ENCODE measurements at regions of chr19 and their contacts with region 1.

Region 1: GRCh38 chr19:43784981-43785808 is 4.4 kb upstream of the KCNN4 start:
- DNase-seq: peak in 2 of 10 donors; percentile 40 to 46
- H3K4me3 ChIP-seq: peak overlapping the region in 4 of 59 donors; percentile 7 to 32 (median 16)
- H3K27ac ChIP-seq: peak overlapping the region in 3 of 59 donors; percentile 21 to 40 (median 38)
- H3K27me3 ChIP-seq: peaks cover 0 to 6% (median 0%) of the 10 kb centered on the region in 45 donors
- CTCF ChIP-seq: peak; percentile 76 to 97 (median 90)

Region 2: DNA sequence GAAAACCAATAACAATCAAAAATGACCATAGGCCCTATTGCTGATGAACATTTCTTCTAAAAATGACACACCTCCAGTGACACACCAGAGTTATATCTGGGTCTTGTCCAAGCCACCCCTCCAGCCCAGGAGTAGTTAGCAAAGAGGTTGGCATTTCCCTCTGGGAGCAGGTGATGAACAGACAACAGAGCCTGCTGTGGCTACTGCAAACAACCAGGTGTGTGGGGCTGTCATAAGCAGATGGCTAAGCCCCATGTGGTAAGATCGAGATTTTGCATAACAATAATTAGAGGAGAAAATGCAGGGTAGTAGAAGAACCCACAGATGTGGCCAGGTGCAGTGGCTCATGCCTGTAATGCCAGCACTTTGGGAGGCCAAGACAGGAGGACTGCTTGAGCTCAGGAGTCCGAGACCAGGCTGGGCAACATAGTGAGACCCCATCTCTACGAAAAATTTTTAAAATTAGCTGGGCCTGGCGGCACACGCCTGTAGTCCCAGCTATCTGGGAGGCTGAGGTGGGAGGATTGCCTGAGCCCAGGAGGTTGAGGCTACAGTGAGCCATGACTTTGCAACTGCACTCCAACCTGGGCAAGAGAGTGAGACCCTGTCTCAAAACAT is 214.9 kb before region 1 on chr19:
- intact Hi-C with region 1: no loop called
- DNase-seq: no peak
- H3K4me3 ChIP-seq: no peak overlapping the region
- H3K27ac ChIP-seq: peak overlapping the region in 15 of 59 donors; percentile 3 to 59 (median 27)
- H3K27me3 ChIP-seq: no peaks in the 10 kb centered on the region
- CTCF ChIP-seq: no peak

Region 3: GRCh38 chr19:43747557-43748204 is 37.5 kb before region 1 on chr19:
- intact Hi-C with region 1: loop called (anchors 2 to 5 kb)
- DNase-seq: no peak
- H3K4me3 ChIP-seq: no peak overlapping the region
- H3K27ac ChIP-seq: no peak overlapping the region
- H3K27me3 ChIP-seq: no peaks in the 10 kb centered on the region
- CTCF ChIP-seq: no peak

Region 4: DNA sequence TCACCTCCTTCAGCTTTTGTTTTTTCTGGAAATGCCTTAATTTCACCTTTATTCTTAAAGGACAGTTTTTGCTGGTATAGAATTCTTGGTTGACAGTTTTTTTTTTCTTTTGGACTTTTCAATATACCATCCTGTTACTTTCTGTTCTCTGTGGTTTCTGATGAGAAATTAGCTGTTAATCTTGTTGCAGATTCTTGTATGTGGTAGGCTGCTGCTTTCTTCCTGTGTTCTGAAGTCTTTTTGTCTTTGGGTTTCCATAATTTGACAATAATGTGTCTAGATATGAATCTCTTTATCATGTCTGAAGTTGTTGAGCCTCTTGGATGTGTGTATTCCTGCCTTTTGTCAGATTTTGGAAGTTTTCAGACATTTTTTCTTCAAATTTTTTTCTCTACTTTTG is 53.9 kb after region 1 on chr19:
- intact Hi-C with region 1: no loop called
- DNase-seq: no peak
- H3K4me3 ChIP-seq: no peak overlapping the region
- H3K27ac ChIP-seq: no peak overlapping the region
- H3K27me3 ChIP-seq: no peaks in the 10 kb centered on the region
- CTCF ChIP-seq: no peak

Region 5: GRCh38 chr19:43855616-43856015 is 70.4 kb after region 1 on chr19:
- intact Hi-C with region 1: no loop called
- DNase-seq: no peak
- H3K4me3 ChIP-seq: no peak overlapping the region
- H3K27ac ChIP-seq: no peak overlapping the region
- H3K27me3 ChIP-seq: no peaks in the 10 kb centered on the region
- CTCF ChIP-seq: no peak